Tibial artery (tissue), 4 donors: ENCODE measurements at regions of chr1 and their contacts with region 1.

Region 1: GRCh38 chr1:182198049-182198501 is 136.6 kb upstream of the ZNF648 start:
- DNase-seq: peak in 1 of 2 donors; percentile 66
- H3K4me3 ChIP-seq: no peak overlapping the region
- H3K27ac ChIP-seq: peak overlapping the region; percentile 70 to 74
- H3K4me1 ChIP-seq: peaks cover 0 to 28% (median 13%) of the 10 kb centered on the region in 4 donors
- H3K27me3 ChIP-seq: no peaks in the 10 kb centered on the region
- CTCF ChIP-seq: peak in 1 of 2 experiments; percentile 37

Region 2: GRCh38 chr1:182350839-182351238 is 152.8 kb after region 1 on chr1:
- intact Hi-C with region 1: loop called (anchors 5 kb)
- DNase-seq: peak in 1 of 2 donors; percentile 63
- H3K4me3 ChIP-seq: no peak overlapping the region
- H3K27ac ChIP-seq: no peak overlapping the region
- H3K4me1 ChIP-seq: peaks cover 0 to 23% (median 10%) of the 10 kb centered on the region in 4 donors
- H3K27me3 ChIP-seq: no peaks in the 10 kb centered on the region
- CTCF ChIP-seq: no peak